HCT116 (cell line): ENCODE measurements at regions of chr6 and their contacts with region 1.

Region 1: DNA sequence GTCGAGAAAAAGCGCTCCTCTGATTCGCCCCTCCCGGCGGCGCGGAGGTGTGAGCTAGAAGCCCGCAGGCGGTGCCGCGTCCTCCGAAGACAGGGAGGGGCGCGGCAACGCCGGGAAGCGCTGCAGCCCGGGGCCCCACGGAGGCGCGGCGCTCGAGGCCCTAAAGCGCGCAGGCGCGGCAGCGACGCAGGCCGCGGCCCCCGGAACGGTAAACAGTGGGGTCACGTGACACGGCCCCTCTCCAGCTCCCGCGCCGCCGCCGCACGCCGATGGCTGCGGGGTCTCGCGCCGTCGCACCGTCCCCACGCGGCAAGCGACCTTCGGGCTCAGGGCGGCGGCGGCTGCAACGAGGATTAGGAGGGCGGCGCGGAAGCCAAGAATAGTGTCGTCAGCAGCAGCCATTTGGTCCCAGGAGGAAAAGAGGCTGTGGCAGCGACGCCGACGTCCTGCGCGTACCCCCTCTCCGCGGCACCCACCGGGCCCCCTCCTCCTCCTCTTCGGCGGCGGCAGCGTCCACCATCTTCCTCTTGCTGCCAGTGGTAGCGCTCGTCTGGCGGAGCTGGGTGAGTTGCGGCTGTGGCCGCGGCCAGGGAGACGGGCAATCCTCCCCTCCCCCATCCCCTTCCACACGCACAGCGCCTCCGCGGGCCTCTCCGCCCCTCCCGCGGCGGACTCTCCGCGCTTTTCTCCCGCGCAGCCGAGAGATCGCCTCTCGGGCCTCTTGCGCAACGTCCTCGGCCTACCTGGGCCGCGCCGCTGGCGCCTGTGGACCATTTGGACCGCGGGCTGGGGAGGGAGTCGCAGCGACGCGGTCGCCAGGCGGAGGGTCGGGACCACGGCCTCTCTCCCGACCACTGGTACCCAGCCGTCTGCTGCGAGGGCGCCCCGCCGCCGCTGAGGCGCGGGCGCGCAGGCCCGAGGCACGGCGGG is at the start of gene PHF3:
- DNase-seq: peak; percentile 79
- ATAC-seq: peak; percentile 90
- H3K4me3 ChIP-seq: peak within 1 kb of the TSS; percentile 81 to 89
- H3K27ac ChIP-seq: peak within 1 kb of the TSS; percentile 98
- H3K4me1 ChIP-seq: peaks cover 11 to 22% of the 10 kb centered on the region in 2 experiments; a peak in 3 of 4 replicates
- H3K27me3 ChIP-seq: no peaks in the 10 kb centered on the region
- CTCF ChIP-seq: peak in 1 of 3 experiments; percentile 13; a peak in 1 of 6 replicates
- POLR2A ChIP-seq: peak; percentile 35
- RAD21 ChIP-seq: peak; percentile 7; the same call in 1 of the 2 replicates
- total RNA-seq, gene PHF3: 51.1 TPM

Region 2: DNA sequence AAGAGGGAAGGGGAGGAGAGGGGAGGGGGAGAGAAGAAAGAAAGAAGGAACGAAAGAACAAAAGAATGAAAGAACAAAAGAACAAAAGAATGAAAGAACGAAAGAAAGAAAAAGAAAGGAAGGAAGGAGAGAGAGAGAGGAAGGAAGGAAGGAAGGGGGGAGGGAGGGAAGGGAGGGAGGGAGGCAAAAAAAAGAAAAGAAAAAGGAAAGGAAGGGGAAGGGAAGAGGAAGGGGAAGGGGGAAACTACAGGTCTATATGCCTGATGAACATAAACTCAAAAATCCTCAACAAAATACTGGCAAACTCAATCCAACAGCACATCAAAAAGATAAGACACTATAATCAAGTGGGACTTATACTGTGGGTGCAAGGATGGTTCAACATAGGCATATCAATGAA is 302.4 kb before region 1 on chr6:
- CTCF ChIA-PET with region 1: no interaction called
- POLR2A ChIA-PET with region 1: no interaction called
- RAD21 ChIA-PET with region 1: no interaction called
- intact Hi-C with region 1: no loop called
- DNase-seq: no peak
- ATAC-seq: no peak
- H3K4me3 ChIP-seq: no peak overlapping the region
- H3K27ac ChIP-seq: no peak overlapping the region
- H3K4me1 ChIP-seq: no peaks in the 10 kb centered on the region
- H3K27me3 ChIP-seq: 0 out of 2 replicates have a peak, but pooled peaks cover 3% of the 10 kb centered on the region
- CTCF ChIP-seq: no peak
- POLR2A ChIP-seq: no peak
- RAD21 ChIP-seq: no peak

Region 3: DNA sequence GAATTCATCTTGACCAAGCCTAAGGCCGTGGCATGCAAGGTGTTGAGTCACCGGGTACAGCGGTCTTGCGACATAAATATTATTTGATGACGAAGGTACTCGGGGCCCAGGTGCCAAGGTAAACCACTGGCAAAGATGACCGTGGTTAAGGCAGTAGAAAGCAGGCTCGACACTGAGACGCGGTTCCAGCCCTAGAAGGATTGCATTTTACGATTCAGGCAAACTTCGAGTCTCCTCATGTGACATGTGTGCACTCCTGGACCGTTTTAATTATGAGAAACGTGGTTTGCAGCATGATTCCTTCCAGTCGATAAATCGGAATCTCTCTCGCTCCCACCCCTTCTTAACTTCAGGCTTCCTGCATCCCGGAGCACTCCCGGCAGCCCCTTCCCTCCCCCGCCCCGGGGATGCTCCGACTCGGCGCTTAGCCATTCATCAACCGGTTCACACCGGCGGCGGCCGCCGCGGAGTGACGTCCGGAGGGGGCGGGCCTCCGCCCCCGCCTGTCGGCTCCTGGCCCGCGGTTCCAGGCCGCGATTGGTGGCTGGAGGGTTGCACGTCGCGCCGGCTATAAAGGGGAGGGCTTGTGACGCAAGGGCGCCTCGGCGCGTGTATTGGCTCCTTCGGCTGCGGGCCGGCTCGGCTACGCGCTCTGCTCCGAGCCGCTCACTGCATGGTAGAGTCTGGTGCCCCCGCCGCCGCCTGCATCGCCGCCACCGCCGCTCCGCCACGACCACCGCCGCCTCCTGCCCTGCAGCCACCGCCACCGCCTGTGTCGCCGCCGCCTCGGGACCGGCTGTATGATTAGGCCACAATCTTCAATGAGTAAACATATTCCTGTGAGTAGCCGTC is 63.7 kb before region 1 on chr6 and contains the starts of genes LOC128125822 and PTP4A1:
- CTCF ChIA-PET with region 1: no interaction called
- POLR2A ChIA-PET with region 1: interaction called, 4 read pairs
- RAD21 ChIA-PET with region 1: no interaction called
- intact Hi-C with region 1: loop called (anchors 2 kb)
- DNase-seq: peak; percentile 92
- ATAC-seq: peak; percentile 87
- H3K4me3 ChIP-seq: peak within 1 kb of the TSS; percentile 69 to 79
- H3K27ac ChIP-seq: peak within 1 kb of the TSS; percentile 98
- H3K4me1 ChIP-seq: peaks cover 12 to 41% of the 10 kb centered on the region in 2 experiments
- H3K27me3 ChIP-seq: no peaks in the 10 kb centered on the region
- CTCF ChIP-seq: no peak; a peak in 1 of 6 replicates
- POLR2A ChIP-seq: peak; percentile 51
- RAD21 ChIP-seq: no peak; the same call in 1 of the 2 replicates
- total RNA-seq, gene PTP4A1: 123 TPM

Region 4: DNA sequence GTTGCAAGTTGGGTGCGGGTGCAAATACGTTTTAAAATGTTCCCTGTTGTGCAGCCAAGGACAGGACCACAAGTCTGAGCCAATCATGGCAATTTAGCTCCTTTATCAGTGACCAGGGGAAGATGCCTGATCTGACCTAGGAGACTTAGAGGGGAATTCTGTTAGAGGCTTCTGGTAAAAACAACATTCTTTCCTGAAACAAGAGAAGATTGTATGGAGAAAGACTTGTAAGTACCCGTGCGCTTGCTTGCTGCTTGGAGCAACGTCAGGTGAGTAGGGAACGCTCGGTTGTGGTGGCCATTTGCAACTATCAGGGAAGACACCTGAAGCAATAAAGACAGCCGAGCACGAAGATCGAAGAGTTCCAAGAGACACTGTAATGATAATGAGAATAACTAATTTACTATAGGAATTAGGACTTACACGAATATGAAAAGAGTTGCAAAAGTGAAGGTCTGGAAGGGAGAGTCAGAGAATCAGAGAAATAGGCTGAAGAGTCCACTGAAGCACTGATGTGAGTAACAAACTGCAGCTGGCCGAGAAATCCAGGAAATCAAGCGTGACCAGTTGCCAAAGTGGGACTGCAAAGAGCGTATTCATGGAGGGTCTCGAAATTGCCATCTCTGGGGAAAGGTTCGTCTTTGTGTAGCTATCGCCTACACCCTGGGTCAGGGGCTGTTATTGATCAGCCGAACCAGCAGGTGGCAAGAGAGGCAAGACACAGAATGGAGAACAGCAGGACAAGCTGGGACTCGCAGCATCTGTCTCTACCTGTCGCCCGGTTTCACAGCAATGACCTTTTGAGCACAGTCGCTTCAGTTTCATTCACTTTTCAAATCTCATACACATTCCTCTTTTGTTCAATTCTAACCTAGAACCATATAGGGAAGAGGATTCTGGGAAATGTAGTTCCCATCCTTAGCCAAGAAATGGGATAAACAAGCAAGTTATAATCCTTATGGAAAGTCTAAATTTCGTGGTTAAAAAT is 37.5 kb before region 1 on chr6:
- CTCF ChIA-PET with region 1: no interaction called
- POLR2A ChIA-PET with region 1: no interaction called
- RAD21 ChIA-PET with region 1: no interaction called
- intact Hi-C with region 1: no loop called
- DNase-seq: peak; percentile 51
- ATAC-seq: peak; percentile 99
- H3K4me3 ChIP-seq: no peak overlapping the region
- H3K27ac ChIP-seq: no peak overlapping the region
- H3K4me1 ChIP-seq: peaks cover 0 to 4% of the 10 kb centered on the region in 2 experiments; a peak in 1 of 4 replicates
- H3K27me3 ChIP-seq: no peaks in the 10 kb centered on the region
- CTCF ChIP-seq: peak; percentile 35 to 80 (median 78); a peak in 5 of 6 replicates
- POLR2A ChIP-seq: no peak
- RAD21 ChIP-seq: peak; percentile 63